Activated T-helper 1 cell treated with anti-CD3 and anti-CD28 coated beads, Interleukin-12 subunit alpha, Interleukin-12 subunit beta, Interleukin-2, Interleukin-4 antibody, amounts not matched to agents 30 ng/mL and 10 ng/mL and 1 ng/mL, durations not matched to agents 14 hours and 24 hours and 36 hours (primary cell): ENCODE measurements at regions of chr17 and their contacts with region 1.

Region 1: GRCh38 chr17:75691371-75691791 is 24.2 kb downstream of the SAP30BP start:
- DNase-seq: peak; percentile 39
- H3K4me3 Mint-ChIP-seq: peak overlapping the region; percentile 12
- H3K27ac Mint-ChIP-seq: peak overlapping the region; percentile 89
- H3K4me1 Mint-ChIP-seq: peaks cover 45% of the 10 kb centered on the region
- H3K27me3 Mint-ChIP-seq: no peaks in the 10 kb centered on the region

Region 2: GRCh38 chr17:75639771-75640316 is 51.5 kb before region 1 on chr17:
- intact Hi-C with region 1: no loop called
- DNase-seq: no peak
- H3K4me3 Mint-ChIP-seq: no peak overlapping the region
- H3K27ac Mint-ChIP-seq: no peak overlapping the region
- H3K4me1 Mint-ChIP-seq: peaks cover under 1% of the 10 kb centered on the region
- H3K27me3 Mint-ChIP-seq: no peaks in the 10 kb centered on the region

Region 3: GRCh38 chr17:75667021-75667790 is 24.2 kb before region 1 on chr17 and contains the starts of genes RECQL5 and SAP30BP:
- intact Hi-C with region 1: loop called (anchors 1 kb)
- DNase-seq: peak; percentile 98
- H3K4me3 Mint-ChIP-seq: peak within 1 kb of the TSS; percentile 79
- H3K27ac Mint-ChIP-seq: peak within 1 kb of the TSS; percentile 71
- H3K4me1 Mint-ChIP-seq: peaks cover 11% of the 10 kb centered on the region
- H3K27me3 Mint-ChIP-seq: no peaks in the 10 kb centered on the region
- total RNA-seq, gene RECQL5: 29.9 and 34.1 TPM in 2 replicates
- total RNA-seq, gene SAP30BP: 113 and 117 TPM in 2 replicates